Sciatic nerve (tissue), 2 donors: ENCODE measurements at regions of chr15 and their contacts with region 1.

Region 1: DNA sequence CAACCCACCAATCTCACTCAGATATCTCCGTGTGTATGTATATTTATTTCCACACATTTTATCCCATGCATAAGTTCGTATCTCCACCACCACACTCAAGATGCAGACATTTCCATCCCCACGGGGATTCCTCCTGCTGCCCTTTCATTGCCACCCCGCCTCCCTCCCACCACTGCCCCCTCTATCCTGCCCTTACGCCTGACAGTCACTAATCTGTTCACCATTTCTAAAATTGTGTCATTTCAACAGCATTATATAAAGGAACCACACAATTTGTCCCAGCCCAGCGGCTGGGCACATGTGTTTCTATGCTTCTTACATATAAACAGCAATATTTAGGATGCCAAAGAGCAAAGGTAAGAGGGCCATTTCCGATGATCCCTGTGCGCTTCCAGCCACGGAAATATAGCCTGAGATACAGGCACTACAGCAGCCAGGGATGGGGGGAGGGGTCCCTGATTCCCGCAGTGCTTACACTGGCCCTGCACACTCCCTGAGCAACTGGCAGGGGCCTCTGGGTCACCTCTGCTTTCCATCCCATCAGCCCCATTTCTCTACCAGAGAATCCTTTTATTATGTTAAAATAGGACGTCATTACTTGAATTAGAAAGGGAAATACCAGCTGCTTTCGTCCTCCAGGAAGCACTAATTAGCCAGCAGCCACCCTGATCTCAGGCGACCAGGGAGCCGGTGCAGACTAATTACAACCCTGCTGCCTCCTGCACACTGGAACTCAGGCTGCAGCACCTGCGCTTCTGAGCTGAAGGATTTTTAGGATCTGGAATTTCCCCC is 372.0 kb upstream of the ATP10A start:
- DNase-seq: no peak
- ATAC-seq: no peak

Region 2: GRCh38 chr15:26179906-26180305 is 55.3 kb before region 1 on chr15:
- intact Hi-C with region 1: loop called (anchors 2 kb)
- DNase-seq: no peak
- ATAC-seq: no peak

Region 3: DNA sequence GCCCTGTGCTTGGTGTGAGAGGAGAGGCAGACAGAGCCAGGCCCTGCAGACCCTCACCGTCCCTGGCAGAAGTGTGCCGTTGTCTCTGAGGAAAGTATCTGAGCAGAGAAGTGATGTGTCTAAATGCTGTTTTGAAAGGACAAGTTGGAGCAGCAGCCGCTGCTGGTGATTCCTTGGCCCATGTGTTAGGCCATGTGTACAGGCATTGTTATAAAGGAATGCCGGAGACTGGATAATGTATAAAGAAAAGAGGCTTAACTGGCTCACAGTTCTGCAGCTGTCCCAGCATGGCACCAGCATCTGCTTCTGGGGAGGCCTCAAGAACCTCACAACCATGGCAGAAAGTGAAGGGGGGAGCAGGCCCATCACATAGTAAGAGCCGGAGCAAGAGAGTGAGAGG is 37.5 kb before region 1 on chr15:
- intact Hi-C with region 1: loop called (anchors 2 kb)
- DNase-seq: no peak
- ATAC-seq: no peak